Caco-2 (cell line): ENCODE measurements at regions of chr2 and their contacts with region 1.

Region 1: DNA sequence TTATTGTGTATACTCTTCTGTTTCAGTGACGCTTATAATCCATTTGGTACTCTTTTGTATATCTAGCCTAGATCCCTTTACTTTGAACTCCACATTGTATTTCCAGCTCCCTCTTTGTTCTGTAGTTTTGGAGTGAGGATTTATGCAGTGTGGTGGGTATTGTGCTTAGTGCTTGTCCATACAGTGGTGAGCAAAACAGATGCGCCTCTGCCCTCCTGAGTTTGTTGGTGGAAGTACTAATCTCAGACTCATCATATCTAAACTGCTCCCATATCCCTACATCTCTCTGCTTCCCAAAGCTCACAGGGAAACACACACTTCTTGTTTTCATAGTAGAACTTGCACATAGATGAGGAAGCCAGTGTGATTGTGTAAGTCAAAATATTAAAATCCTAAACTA is 12.1 kb downstream of the PTCD3 start:
- DNase-seq: peak in 1 of 2 experiments; percentile 42
- H3K4me3 ChIP-seq: no peak overlapping the region
- H3K4me3 Mint-ChIP-seq: peak overlapping the region; percentile 2
- H3K27ac Mint-ChIP-seq: peak overlapping the region; percentile 40
- H3K4me1 ChIP-seq: peaks cover 32% of the 10 kb centered on the region
- H3K4me1 Mint-ChIP-seq: peaks cover 53% of the 10 kb centered on the region
- H3K27me3 ChIP-seq: no peaks in the 10 kb centered on the region
- H3K27me3 Mint-ChIP-seq: no peaks in the 10 kb centered on the region
- CTCF ChIP-seq: peak; percentile 14 to 19

Region 2: GRCh38 chr2:85826990-85827878 is 290.9 kb before region 1 on chr2:
- CTCF ChIA-PET with region 1: interaction called, 10 read pairs
- POLR2A ChIA-PET with region 1: no interaction called
- intact Hi-C with region 1: no loop called
- DNase-seq: peak; percentile 64 to 82
- H3K4me3 ChIP-seq: no peak overlapping the region
- H3K4me3 Mint-ChIP-seq: peak overlapping the region; percentile 3
- H3K27ac Mint-ChIP-seq: no peak overlapping the region
- H3K4me1 ChIP-seq: no peaks in the 10 kb centered on the region
- H3K4me1 Mint-ChIP-seq: peaks cover 5% of the 10 kb centered on the region
- H3K27me3 ChIP-seq: no peaks in the 10 kb centered on the region
- H3K27me3 Mint-ChIP-seq: peaks cover 3% of the 10 kb centered on the region
- CTCF ChIP-seq: peak; percentile 87 to 91

Region 3: DNA sequence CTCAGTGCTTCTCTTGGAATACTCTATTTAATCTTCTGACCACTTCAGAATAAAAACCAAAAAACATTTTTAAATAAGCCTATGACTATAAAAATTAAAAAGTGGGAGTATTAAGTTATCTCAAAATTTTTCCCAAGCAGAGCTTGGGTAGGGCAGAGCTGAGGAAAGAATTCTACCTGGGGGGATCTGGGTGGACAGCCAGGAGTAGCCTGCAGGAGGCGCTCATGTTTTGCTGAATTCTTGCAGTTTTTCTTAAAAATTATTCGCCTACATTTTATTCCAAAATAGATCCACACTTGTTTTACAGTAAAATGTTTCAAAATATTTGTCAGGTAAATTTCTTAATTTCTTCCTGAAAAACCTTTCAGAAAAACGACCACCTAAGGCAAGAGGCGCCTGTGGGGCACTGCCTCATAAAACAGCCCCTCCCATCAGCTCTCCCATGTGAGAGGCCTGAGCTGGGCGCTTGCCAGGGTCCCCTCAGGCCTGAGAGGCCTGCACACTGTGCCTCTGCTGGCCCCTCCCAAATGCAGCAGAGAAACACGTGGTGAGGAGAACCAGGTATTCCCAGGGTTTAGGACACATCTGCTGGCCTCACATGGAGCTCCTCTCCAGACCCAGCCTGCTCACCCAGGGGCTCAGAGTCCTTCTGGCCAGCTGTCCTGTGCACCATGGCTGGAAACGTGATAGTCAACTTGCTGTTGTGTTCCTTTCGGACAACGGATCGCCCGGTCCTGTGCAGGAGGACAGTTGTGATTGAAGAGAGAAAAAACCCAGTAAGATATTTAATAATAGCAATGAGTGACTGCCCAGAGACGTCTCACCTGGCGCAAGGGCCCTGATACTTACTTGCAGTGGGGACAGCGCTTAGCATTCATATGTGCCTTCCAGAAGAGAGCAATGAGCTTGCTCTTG is 29.9 kb before region 1 on chr2:
- CTCF ChIA-PET with region 1: interaction called, 11 read pairs
- POLR2A ChIA-PET with region 1: no interaction called
- intact Hi-C with region 1: no loop called
- DNase-seq: peak in 1 of 2 experiments; percentile 20
- H3K4me3 ChIP-seq: no peak overlapping the region
- H3K4me3 Mint-ChIP-seq: no peak overlapping the region
- H3K27ac Mint-ChIP-seq: no peak overlapping the region
- H3K4me1 ChIP-seq: no peaks in the 10 kb centered on the region
- H3K4me1 Mint-ChIP-seq: no peaks in the 10 kb centered on the region
- H3K27me3 ChIP-seq: no peaks in the 10 kb centered on the region
- H3K27me3 Mint-ChIP-seq: no peaks in the 10 kb centered on the region
- CTCF ChIP-seq: peak; percentile 47 to 53

Region 4: GRCh38 chr2:86105252-86105968 is 12.7 kb before region 1 on chr2 and contains the start of gene POLR1A:
- CTCF ChIA-PET with region 1: interaction called, 16 read pairs
- POLR2A ChIA-PET with region 1: interaction called, 32 read pairs
- intact Hi-C with region 1: loop called (anchors 1 kb)
- DNase-seq: peak; percentile 91 to 94
- H3K4me3 ChIP-seq: peak within 1 kb of the TSS; percentile 90
- H3K4me3 Mint-ChIP-seq: peak within 1 kb of the TSS; percentile 91
- H3K27ac Mint-ChIP-seq: peak within 1 kb of the TSS; percentile 98
- H3K4me1 ChIP-seq: peaks cover 9% of the 10 kb centered on the region
- H3K4me1 Mint-ChIP-seq: peaks cover 30% of the 10 kb centered on the region
- H3K27me3 ChIP-seq: no peaks in the 10 kb centered on the region
- H3K27me3 Mint-ChIP-seq: no peaks in the 10 kb centered on the region
- CTCF ChIP-seq: no peak
- total RNA-seq, gene POLR1A: 73.8 and 79.5 TPM in 2 replicates

Region 5: GRCh38 chr2:86195055-86195807 is 77.1 kb after region 1 on chr2 and contains the start of gene IMMT:
- CTCF ChIA-PET with region 1: no interaction called
- POLR2A ChIA-PET with region 1: interaction called, 13 read pairs
- intact Hi-C with region 1: no loop called
- DNase-seq: peak; percentile 98
- H3K4me3 ChIP-seq: peak within 1 kb of the TSS; percentile 68
- H3K4me3 Mint-ChIP-seq: peak within 1 kb of the TSS; percentile 84
- H3K27ac Mint-ChIP-seq: peak within 1 kb of the TSS; percentile 81
- H3K4me1 ChIP-seq: peaks cover 9% of the 10 kb centered on the region; the same call in 1 of the 2 replicates
- H3K4me1 Mint-ChIP-seq: peaks cover 27% of the 10 kb centered on the region
- H3K27me3 ChIP-seq: no peaks in the 10 kb centered on the region
- H3K27me3 Mint-ChIP-seq: no peaks in the 10 kb centered on the region
- CTCF ChIP-seq: no peak
- total RNA-seq, gene IMMT: 125 and 129 TPM in 2 replicates